Aorta (tissue), 5 donors: ENCODE measurements at regions of chr5 and their contacts with region 1.

Region 1: DNA sequence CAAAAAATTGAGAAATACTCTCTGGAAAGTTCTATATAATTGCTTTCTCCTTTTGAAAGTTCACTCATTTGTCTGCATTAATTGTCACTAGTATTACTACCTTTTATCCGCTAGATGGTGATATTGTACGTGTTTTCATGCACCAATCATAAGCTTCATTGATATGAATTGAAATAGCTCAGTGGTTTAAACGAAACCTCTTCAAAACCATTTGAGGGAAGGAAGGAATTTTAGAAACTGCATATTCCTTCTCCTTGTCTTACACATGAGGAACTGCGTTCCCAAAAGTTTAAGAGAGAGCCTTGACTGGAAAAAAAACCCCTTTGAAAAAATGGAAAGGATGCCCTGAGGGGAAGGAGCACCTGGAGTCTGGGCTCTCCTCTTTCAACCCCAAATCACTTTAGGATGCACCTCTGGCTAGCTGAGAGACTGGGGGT is 98.6 kb downstream of the YTHDC2 start:
- DNase-seq: no peak
- ATAC-seq: peak; percentile 79
- H3K4me3 ChIP-seq: no peak overlapping the region
- H3K27ac ChIP-seq: no peak overlapping the region
- H3K4me1 ChIP-seq: no peaks in the 10 kb centered on the region
- H3K27me3 ChIP-seq: no peaks in the 10 kb centered on the region

Region 2: DNA sequence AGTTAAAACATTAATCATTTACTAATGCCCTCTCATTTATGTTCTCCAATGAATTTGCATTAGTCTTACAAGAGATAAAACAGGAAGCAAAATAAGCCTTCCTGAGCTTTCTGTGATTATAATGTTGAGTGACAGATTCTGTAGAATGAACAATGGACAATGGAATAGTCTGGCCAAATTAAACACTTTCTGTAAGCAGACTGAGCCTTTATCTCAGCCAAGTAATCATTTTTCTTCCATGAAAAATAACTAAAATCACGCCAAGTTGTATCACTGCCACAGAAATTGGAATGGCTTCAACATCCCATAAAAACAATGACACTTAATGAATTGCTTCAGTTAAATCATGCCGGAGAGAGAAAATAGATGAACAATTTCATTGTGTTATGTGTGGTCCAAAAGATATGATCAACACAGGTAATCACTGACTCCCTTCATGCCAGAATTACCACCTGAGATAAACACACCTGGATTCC is 240.3 kb before region 1 on chr5:
- intact Hi-C with region 1: no loop called
- DNase-seq: no peak
- ATAC-seq: no peak
- H3K4me3 ChIP-seq: no peak overlapping the region
- H3K27ac ChIP-seq: no peak overlapping the region
- H3K4me1 ChIP-seq: peaks cover 0 to 1% of the 10 kb centered on the region in 2 donors
- H3K27me3 ChIP-seq: no peaks in the 10 kb centered on the region

Region 3: DNA sequence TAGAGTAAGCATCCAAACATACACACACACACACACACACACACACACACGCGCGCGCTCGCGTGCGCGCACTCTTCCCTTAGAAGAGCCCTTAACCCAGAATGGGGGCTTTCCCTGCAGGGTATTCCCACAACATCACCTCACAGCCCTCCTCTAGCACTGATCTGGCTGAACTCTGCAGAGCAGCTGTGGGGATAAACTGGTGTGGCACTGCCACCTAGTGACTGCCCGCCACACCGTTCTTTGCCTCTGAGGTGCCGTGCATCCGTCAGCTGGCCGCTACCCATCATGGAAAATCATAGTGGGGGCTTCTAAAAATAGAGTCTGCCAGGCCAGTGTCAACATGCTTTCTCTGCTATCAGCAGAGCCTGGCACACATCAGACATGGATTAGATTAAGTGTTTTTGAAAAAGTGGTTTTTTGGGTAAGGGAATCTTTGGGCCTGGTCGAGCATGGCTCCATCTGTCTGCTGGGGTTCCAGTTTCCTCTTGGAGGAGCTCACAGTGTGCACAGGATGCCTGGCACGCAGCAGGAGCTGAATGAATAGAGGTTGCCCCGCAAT is 837.9 kb after region 1 on chr5:
- intact Hi-C with region 1: loop called (anchors 2 to 5 kb)
- DNase-seq: peak; percentile 65 to 89
- ATAC-seq: peak; percentile 91
- H3K4me3 ChIP-seq: no peak overlapping the region
- H3K27ac ChIP-seq: no peak overlapping the region
- H3K4me1 ChIP-seq: no peaks in the 10 kb centered on the region
- H3K27me3 ChIP-seq: no peaks in the 10 kb centered on the region

Region 4: GRCh38 chr5:114789773-114790402 is 1177.8 kb after region 1 on chr5:
- intact Hi-C with region 1: loop called in 1 of 2 experiments (anchors 10 kb)
- DNase-seq: no peak
- ATAC-seq: no peak
- H3K4me3 ChIP-seq: no peak overlapping the region
- H3K27ac ChIP-seq: no peak overlapping the region
- H3K4me1 ChIP-seq: no peaks in the 10 kb centered on the region
- H3K27me3 ChIP-seq: no peaks in the 10 kb centered on the region

Region 5: DNA sequence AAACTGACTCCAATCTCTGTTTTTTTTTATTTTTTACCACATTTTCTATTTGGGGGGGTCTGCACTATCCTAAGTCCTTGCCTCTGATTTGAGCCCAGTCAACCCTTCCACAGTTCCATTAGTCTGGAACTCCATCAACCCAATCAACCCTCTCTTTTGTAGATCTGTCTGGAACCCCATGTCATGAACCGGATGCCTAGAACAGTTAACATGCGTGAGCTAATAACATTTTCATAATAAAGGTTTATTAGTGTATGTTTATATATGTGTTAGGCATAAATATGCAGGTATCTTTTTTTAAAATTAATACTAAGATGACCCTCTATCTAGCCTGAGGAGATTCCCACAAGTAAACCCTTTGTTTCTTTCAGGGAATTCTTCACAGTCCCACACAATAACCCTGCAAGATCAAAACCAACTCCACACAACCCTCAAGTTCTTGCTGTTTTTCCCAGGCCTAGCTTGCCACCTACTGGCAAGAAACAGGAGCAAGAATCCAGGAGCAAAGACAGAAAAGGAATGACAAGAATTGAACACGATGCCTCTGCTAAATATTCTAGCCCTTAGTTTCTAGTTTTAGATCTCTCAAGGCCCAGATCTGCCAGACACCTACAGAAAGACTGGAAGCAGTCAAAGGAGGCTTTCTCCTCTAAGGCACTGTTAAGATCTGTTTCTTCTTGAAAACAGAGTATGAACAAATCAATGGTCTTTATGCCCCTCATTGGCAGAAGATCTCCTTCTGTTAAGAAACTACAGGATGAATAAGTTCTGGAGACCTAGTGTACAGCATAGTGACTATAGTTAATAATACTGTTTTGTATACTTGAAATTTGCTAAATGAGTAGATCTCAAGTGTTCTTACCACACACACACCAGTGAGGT is 1457.2 kb after region 1 on chr5:
- intact Hi-C with region 1: loop called (anchors 5 to 10 kb)
- DNase-seq: no peak
- ATAC-seq: no peak
- H3K4me3 ChIP-seq: no peak overlapping the region
- H3K27ac ChIP-seq: no peak overlapping the region
- H3K4me1 ChIP-seq: no peaks in the 10 kb centered on the region
- H3K27me3 ChIP-seq: peaks cover 0 to 2% of the 10 kb centered on the region in 2 donors